Gastrocnemius medialis (tissue), 4 donors: ENCODE measurements at regions of chr13 and their contacts with region 1.

Region 1: GRCh38 chr13:74133657-74134201 is 475 bp downstream of the KLF12 start:
- DNase-seq: peak; percentile 63 to 79
- ATAC-seq: peak; percentile 43 to 48
- H3K4me3 ChIP-seq: peak overlapping the region; percentile 84 to 97 (median 90)
- H3K27ac ChIP-seq: peak overlapping the region; percentile 94 to 96 (median 96)
- H3K4me1 ChIP-seq: peaks cover 28 to 34% of the 10 kb centered on the region in 2 donors
- H3K27me3 ChIP-seq: no peaks in the 10 kb centered on the region
- CTCF ChIP-seq: no peak
- POLR2A ChIP-seq: peak; percentile 26 to 54

Region 2: DNA sequence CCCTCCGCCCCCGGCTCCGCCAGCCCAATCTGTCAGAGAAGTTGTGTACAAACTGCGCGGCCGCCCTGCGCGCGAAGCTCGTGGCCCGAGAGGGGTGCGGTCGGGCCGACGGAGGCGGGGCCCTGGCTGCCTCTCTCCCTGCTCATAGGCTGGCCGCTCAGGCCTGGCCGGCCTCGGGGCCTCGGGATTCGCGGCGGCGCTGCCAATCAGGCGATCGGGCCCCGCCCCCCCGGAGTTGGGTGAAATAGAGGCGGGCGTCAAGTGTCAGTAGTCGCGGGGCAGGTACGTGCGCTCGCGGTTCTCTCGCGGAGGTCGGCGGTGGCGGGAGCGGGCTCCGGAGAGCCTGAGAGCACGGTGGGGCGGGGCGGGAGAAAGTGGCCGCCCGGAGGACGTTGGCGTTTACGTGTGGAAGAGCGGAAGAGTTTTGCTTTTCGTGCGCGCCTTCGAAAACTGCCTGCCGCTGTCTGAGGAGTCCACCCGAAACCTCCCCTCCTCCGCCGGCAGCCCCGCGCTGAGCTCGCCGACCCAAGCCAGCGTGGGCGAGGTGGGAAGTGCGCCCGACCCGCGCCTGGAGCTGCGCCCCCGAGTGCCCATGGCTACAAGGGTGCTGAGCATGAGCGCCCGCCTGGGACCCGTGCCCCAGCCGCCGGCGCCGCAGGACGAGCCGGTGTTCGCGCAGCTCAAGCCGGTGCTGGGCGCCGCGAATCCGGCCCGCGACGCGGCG is 1074.8 kb before region 1 on chr13 and contains the start of gene KLF5:
- in situ Hi-C with region 1: no loop called
- intact Hi-C with region 1: loop called (anchors 10 kb)
- DNase-seq: peak; percentile 96 to 98
- ATAC-seq: peak; percentile 86 to 90
- H3K4me3 ChIP-seq: peak within 1 kb of the TSS; percentile 76 to 89 (median 84)
- H3K27ac ChIP-seq: peak within 1 kb of the TSS; percentile 90 to 94 (median 92)
- H3K4me1 ChIP-seq: peaks cover 5 to 8% of the 10 kb centered on the region in 2 donors
- H3K27me3 ChIP-seq: peaks cover 0 to 7% (median 0%) of the 10 kb centered on the region in 3 donors
- CTCF ChIP-seq: no peak
- POLR2A ChIP-seq: peak; percentile 99 to 100
- total RNA-seq, gene KLF5: 9.8 to 15.6 (median 10.9) TPM

Region 3: DNA sequence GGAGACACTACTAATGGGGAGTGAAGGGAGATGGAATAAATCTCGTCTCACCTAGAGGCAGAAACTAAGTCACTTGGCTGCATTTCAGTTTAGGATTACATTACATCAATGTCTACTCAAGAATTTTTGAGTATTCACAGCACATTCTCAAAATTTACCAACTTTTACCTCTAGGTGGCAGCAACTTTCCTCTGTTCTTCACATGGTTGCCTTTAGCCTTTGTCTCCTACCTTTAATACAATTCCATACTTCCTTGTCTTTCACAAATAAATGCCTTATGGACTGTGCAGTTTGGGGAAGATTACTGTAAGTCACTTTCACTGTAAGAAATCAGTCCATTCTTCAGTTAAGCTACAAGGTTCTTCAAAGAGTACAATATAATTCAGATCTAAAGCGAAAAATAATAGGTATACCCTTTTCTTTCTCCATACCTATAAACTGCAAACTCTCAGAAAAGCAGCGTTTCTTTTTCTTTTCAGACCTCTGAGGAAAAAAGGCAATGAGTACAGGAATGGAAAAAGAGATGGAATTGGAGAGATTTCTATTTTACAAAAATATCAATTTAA is 378.9 kb before region 1 on chr13:
- in situ Hi-C with region 1: no loop called
- intact Hi-C with region 1: loop called (anchors 10 kb)
- DNase-seq: no peak
- ATAC-seq: peak; percentile 56 to 66
- H3K4me3 ChIP-seq: no peak overlapping the region
- H3K27ac ChIP-seq: no peak overlapping the region
- H3K4me1 ChIP-seq: peaks cover 9 to 12% of the 10 kb centered on the region in 2 donors
- H3K27me3 ChIP-seq: no peaks in the 10 kb centered on the region
- CTCF ChIP-seq: peak; percentile 48 to 73 (median 59)
- POLR2A ChIP-seq: no peak

Region 4: DNA sequence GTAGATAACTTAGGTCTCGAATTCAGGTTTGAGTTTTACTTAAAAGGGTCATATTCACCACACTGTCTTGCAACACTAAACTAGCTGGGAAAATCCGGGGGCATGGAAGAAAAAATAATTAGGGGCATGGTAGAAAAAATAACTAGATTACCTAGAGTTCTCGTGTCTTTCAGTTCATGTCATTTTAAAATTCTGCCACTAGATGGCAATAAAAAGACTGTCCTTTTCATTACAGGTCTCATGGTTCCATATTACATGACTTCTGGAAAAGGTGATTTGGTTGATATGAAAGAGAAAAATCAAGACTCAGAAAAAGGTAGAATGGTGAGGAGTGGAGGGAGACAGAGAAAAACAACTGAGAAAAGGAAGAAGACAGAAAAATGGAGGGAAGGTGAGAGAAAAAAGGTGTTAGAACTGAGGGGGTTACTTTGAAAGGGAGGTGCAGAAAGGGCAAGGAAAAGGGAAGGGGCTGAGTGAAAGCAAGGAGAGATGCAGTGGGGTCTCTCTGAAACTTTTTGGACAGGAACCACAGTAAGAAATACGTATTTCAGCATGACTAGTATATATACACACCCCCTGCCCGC is 298.5 kb before region 1 on chr13:
- in situ Hi-C with region 1: no loop called
- intact Hi-C with region 1: loop called (anchors 10 kb)
- DNase-seq: no peak
- ATAC-seq: peak; percentile 54 to 60
- H3K4me3 ChIP-seq: no peak overlapping the region
- H3K27ac ChIP-seq: no peak overlapping the region
- H3K4me1 ChIP-seq: peaks cover 3 to 7% of the 10 kb centered on the region in 2 donors
- H3K27me3 ChIP-seq: no peaks in the 10 kb centered on the region
- CTCF ChIP-seq: peak in 4 of 5 experiments; percentile 59 to 73 (median 64)
- POLR2A ChIP-seq: no peak

Region 5: DNA sequence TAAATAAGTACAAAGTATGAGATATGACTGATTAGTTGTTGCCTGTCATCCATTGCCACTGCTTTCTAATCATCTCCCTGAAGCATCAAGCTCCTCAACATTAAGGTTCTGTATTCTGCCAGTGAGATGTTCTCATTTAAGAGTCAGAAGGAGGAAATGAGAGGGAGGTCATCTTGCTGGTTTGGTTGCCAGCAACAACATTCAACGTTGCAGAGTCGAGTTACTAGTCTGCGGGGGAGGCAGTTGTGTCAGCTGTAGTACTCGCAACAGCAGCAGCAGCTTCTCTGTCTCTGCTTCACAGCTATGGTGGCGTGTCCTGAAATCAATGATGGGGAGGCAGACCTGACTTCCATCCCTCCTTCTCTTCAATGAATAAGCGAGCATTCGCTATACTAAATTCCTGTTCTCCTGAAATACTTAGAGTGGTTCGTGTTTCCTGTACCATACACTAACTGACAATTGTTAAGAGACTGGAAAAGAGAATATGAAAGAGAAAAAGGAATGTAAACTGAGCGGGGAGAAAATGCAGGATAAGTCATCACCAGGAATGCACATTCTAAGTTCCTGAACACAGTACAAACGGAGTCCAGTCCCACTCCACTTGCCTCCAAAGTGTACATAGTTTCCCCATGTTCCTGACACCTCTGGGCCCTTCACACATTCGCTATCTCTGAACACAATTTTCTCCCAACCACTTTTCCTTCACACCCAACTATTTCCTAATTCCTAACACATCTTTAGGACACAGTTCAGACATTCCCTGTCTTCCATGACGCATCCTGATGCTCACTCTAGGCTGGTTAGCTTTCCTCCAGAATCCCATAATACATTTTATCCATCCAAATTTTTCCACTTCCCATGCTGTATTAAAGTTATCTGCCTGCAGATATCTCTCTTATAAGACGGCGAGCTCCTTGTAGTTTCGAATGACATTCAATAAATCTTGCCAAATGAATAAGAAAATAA is 262.5 kb before region 1 on chr13:
- in situ Hi-C with region 1: no loop called
- intact Hi-C with region 1: no loop called
- DNase-seq: no peak
- ATAC-seq: no peak
- H3K4me3 ChIP-seq: no peak overlapping the region
- H3K27ac ChIP-seq: no peak overlapping the region
- H3K4me1 ChIP-seq: no peaks in the 10 kb centered on the region
- H3K27me3 ChIP-seq: no peaks in the 10 kb centered on the region
- CTCF ChIP-seq: no peak
- POLR2A ChIP-seq: no peak

Region 6: DNA sequence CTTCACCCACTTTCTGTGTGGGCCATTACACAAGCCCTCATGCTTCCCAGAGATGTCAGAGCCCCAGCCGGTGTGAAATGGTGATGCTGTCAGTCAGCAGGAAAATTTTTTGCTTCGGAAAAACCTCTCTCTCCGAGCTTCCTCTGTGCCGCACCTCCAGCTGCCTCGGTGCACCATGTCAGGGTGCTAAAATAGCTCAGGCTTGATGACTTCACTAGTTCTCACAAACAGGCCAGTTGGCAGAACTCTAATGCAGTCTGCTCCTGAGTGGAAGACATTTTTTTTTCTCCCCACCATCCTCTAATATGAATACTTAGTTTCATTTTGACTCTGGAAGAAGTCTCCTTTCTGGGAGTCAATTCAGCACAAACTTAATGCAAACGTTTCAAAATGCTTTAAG is 70.8 kb before region 1 on chr13:
- in situ Hi-C with region 1: no loop called
- intact Hi-C with region 1: loop called (anchors 2 kb)
- DNase-seq: peak; percentile 53 to 72
- ATAC-seq: peak; percentile 98 to 99
- H3K4me3 ChIP-seq: peak overlapping the region; percentile 34 to 45 (median 40)
- H3K27ac ChIP-seq: peak overlapping the region; percentile 71 to 79 (median 76)
- H3K4me1 ChIP-seq: peaks cover 38 to 62% of the 10 kb centered on the region in 2 donors
- H3K27me3 ChIP-seq: no peaks in the 10 kb centered on the region
- CTCF ChIP-seq: no peak
- POLR2A ChIP-seq: no peak

Region 7: GRCh38 chr13:74168263-74168675 is 34.5 kb after region 1 on chr13:
- in situ Hi-C with region 1: no loop called
- intact Hi-C with region 1: loop called (anchors 2 kb)
- DNase-seq: peak; percentile 75
- ATAC-seq: peak; percentile 97 to 99
- H3K4me3 ChIP-seq: peak overlapping the region; percentile 15 to 45 (median 38)
- H3K27ac ChIP-seq: peak overlapping the region; percentile 64 to 84 (median 74)
- H3K4me1 ChIP-seq: peaks cover 5 to 18% of the 10 kb centered on the region in 2 donors
- H3K27me3 ChIP-seq: no peaks in the 10 kb centered on the region
- CTCF ChIP-seq: no peak
- POLR2A ChIP-seq: peak in 1 of 2 donors; percentile 22

Region 8: GRCh38 chr13:74191410-74191809 is 57.7 kb after region 1 on chr13:
- in situ Hi-C with region 1: no loop called
- intact Hi-C with region 1: no loop called
- DNase-seq: no peak
- ATAC-seq: no peak
- H3K4me3 ChIP-seq: no peak overlapping the region
- H3K27ac ChIP-seq: no peak overlapping the region
- H3K4me1 ChIP-seq: peaks cover 5 to 17% of the 10 kb centered on the region in 2 donors
- H3K27me3 ChIP-seq: no peaks in the 10 kb centered on the region
- CTCF ChIP-seq: no peak
- POLR2A ChIP-seq: no peak

Region 9: DNA sequence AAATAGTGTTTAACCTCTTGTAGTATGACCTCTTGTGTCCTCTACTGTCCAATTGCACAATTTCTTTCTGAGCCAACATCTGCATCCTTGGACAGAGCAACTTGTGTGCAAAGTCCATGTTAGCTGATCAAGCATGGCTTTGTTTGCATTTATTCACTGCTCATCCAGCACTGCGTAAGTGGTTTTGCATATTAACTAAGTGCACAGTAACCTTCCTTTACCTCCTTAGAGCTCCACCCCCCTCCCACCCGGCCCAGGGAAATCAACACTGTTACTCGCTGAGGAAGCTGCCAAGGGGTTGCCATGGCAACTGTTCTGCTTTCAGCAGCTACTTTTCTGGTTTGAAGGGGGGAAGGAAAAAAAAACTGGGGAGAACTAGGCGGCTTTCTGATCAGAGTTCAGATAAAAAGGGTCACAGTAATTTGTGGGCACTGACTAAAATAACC is 154.0 kb after region 1 on chr13:
- in situ Hi-C with region 1: no loop called
- intact Hi-C with region 1: loop called (anchors 2 kb)
- DNase-seq: peak; percentile 26 to 43
- ATAC-seq: no peak
- H3K4me3 ChIP-seq: peak overlapping the region; percentile 8 to 28 (median 18)
- H3K27ac ChIP-seq: no peak overlapping the region
- H3K4me1 ChIP-seq: peaks cover 34 to 43% of the 10 kb centered on the region in 2 donors
- H3K27me3 ChIP-seq: no peaks in the 10 kb centered on the region
- CTCF ChIP-seq: no peak
- POLR2A ChIP-seq: no peak

Region 10: DNA sequence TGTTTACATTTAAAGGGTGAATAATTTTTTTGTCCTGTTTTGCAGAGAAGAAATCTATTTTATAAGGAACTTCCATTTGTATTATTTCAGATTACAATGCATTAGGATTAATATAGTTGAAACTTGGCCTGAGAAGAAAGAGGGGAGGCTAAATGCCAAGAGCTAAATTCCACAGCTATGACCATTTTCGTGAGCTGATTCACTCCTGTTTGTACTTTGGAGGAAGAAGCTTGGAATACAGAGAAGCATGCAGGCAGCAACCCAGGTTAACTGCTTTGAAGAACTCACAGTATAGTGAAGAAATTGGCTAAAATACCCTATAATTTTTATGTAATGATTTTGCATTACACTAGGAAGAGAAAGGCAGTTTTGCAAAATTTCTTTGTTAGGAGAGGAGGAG is 309.9 kb after region 1 on chr13:
- in situ Hi-C with region 1: no loop called
- intact Hi-C with region 1: no loop called
- DNase-seq: no peak
- ATAC-seq: no peak
- H3K4me3 ChIP-seq: no peak overlapping the region
- H3K27ac ChIP-seq: no peak overlapping the region
- H3K4me1 ChIP-seq: peaks cover 0 to 3% of the 10 kb centered on the region in 2 donors
- H3K27me3 ChIP-seq: no peaks in the 10 kb centered on the region
- CTCF ChIP-seq: no peak
- POLR2A ChIP-seq: no peak